ENCODE measurements at regions of chr6 and their contacts with region 1.

Region 1: GRCh38 chr6:149082286-149082707 is 235.2 kb upstream of the TAB2 start:
- DNase-seq: peak; percentile 69 to 82
- ATAC-seq: peak; percentile 52 to 75 (median 66)
- H3K4me3 ChIP-seq: no peak overlapping the region
- H3K27ac ChIP-seq: no peak overlapping the region
- H3K4me1 ChIP-seq: peaks cover 2 to 27% (median 21%) of the 10 kb centered on the region in 9 donors
- H3K27me3 ChIP-seq: peaks cover 0 to 15% (median 0%) of the 10 kb centered on the region in 7 donors
- CTCF ChIP-seq: peak; percentile 51 to 87 (median 86)

Region 2: GRCh38 chr6:148682990-148683389 is 399.3 kb before region 1 on chr6:
- intact Hi-C with region 1: no loop called
- DNase-seq: no peak
- ATAC-seq: peak in 6 of 8 donors; percentile 16 to 72 (median 46)
- H3K4me3 ChIP-seq: peak overlapping the region in 1 of 10 donors; percentile 3
- H3K27ac ChIP-seq: peak overlapping the region in 1 of 10 donors; percentile 41
- H3K4me1 ChIP-seq: peaks cover 0 to 22% (median 0%) of the 10 kb centered on the region in 9 donors
- H3K27me3 ChIP-seq: no peaks in the 10 kb centered on the region
- CTCF ChIP-seq: no peak

Region 3: DNA sequence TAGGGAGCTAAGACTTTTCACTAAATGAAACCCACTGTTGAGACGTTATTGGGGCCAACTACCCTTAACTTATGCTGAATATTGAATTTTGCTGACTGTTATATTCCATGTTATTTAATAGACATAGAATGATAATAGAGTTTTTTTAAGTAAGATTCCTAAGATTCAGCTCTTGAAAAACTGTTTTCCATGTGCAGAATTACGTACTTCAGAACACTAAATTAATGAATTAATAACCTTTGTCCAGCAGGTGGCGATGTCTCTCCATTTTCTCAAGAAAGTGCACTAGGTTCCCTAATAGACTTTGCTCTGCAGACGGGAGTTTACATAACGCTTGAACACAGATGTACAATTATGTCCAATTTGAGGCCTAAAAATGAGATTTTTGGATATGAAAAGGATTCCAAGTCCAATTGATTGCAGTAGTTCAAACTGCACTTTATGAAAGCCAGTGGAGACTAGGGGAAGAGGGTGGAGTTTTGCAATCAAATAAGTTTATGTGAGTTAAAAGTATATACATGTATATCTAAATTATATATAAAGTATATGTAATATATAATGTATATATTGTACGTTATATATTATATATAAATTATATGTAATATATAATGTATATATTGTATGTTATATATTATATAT is 53.4 kb before region 1 on chr6:
- intact Hi-C with region 1: loop called in 4 of 10 experiments (anchors 2 to 5 kb)
- DNase-seq: peak in 1 of 2 donors; percentile 84
- ATAC-seq: peak; percentile 57 to 80 (median 76)
- H3K4me3 ChIP-seq: no peak overlapping the region
- H3K27ac ChIP-seq: no peak overlapping the region
- H3K4me1 ChIP-seq: peaks cover 0 to 21% (median 0%) of the 10 kb centered on the region in 9 donors
- H3K27me3 ChIP-seq: no peaks in the 10 kb centered on the region
- CTCF ChIP-seq: peak; percentile 66 to 87 (median 80)

Region 4: DNA sequence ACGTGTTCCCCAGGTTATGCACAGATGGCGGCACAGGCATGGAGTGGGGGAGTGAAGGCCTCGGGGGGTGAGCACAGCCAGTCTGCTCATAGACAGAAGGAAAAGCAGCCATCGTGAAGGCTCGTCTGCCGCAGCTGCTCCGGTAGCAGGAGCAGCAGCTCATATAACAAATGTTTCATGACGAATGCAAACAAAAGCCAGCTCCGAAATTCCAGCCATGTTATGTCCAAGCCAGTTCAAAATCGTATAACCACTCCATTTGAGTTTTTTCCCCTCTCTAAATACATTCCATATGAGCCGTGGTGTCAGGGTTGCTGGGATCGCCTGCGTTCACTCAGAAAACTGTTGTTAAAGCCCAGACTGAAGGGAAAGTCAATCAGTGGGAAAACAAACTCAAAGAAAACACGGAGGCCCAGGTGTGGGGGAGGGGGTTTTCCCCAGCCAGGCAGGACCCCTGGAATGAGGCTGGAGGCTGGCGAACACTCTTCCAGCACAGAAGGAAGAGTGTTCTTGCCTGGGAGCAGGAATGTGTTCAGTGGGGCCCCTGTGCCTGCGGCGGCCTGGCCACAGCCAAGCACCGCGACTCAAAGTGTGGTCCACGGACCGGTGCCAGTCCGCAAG is 45.1 kb before region 1 on chr6:
- intact Hi-C with region 1: loop called in 3 of 10 experiments (anchors 5 kb)
- DNase-seq: no peak
- ATAC-seq: no peak
- H3K4me3 ChIP-seq: no peak overlapping the region
- H3K27ac ChIP-seq: no peak overlapping the region
- H3K4me1 ChIP-seq: peaks cover 0 to 10% (median 0%) of the 10 kb centered on the region in 9 donors
- H3K27me3 ChIP-seq: peaks cover 0 to 3% (median 0%) of the 10 kb centered on the region in 7 donors
- CTCF ChIP-seq: no peak

Region 5: GRCh38 chr6:149316798-149317655 is 234.7 kb after region 1 on chr6:
- intact Hi-C with region 1: loop called in 4 of 10 experiments (anchors 5 to 10 kb)
- DNase-seq: peak; percentile 90
- ATAC-seq: peak; percentile 95 to 97 (median 96)
- H3K4me3 ChIP-seq: peak overlapping the region; percentile 89 to 99 (median 93)
- H3K27ac ChIP-seq: peak overlapping the region; percentile 93 to 99 (median 97)
- H3K4me1 ChIP-seq: peaks cover 0 to 44% (median 26%) of the 10 kb centered on the region in 9 donors
- H3K27me3 ChIP-seq: peaks cover 0 to 11% (median 0%) of the 10 kb centered on the region in 7 donors
- CTCF ChIP-seq: no peak

Region 6: DNA sequence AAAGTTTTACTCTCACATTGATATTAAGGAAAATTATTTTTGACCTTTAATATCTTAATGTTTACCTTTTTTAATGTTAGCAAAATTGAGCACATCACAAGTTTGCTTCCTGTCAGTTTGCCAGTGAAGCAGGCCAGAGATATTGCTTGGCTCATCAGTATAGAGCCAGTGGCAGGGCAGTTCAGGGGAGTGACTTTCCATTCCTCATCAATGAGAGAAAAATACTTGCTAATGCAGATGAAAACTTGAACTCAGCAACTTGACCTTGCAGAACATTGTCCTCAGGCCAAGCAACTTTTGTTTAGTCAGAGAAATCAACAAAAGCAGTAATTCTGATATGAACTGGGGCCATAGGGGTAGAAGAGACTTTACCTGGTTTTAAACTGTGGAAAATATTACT is 242.1 kb after region 1 on chr6:
- intact Hi-C with region 1: loop called in 4 of 10 experiments (anchors 5 to 10 kb)
- DNase-seq: no peak
- ATAC-seq: peak in 2 of 8 donors; percentile 59 to 67
- H3K4me3 ChIP-seq: no peak overlapping the region
- H3K27ac ChIP-seq: no peak overlapping the region
- H3K4me1 ChIP-seq: peaks cover 5 to 94% (median 64%) of the 10 kb centered on the region in 9 donors
- H3K27me3 ChIP-seq: no peaks in the 10 kb centered on the region
- CTCF ChIP-seq: no peak

Region 7: DNA sequence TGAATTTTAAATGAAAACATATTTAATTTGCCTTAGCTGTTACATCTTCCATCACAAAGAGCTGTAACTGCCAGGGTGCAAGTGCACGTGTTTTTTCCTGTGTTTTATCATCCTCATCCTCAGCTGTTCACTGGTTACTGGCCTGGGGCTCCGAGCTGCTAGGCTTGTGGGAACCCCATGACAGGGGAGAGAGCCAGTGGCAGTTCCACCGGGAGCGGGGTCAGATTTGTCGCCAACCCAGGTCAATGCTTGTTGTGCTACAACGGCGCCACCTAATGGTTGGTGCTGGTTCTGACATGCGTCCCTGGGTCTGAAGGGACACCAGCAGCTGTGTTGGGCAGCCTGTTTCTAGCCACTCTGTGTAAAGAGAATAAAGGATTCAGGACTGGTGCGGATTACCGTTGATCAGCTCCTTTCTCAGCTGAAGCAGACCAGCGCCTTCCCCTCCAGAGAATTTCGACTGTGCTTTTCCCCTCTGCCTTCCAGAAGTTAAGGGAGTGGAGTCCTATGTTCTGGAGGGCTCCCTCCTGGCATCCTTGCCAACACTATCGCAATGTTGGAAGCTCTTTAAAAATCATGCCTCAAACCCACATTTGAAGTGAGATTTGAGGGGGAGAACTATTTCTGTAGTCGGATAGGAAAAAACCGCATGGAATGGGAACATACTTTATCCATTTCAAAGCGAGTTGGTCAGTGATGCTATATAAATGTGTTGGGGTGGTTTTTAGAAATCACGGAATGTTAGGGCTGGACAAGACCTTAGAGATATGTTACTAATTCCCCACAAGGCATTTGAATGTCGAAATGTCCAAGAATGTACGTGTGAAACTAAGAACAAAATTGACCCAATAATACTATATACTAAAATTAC is 349.8 kb after region 1 on chr6:
- intact Hi-C with region 1: loop called (anchors 1 to 5 kb)
- DNase-seq: peak; percentile 87 to 89
- ATAC-seq: peak; percentile 89 to 97 (median 93)
- H3K4me3 ChIP-seq: no peak overlapping the region
- H3K27ac ChIP-seq: no peak overlapping the region
- H3K4me1 ChIP-seq: peaks cover 0 to 7% (median 0%) of the 10 kb centered on the region in 9 donors
- H3K27me3 ChIP-seq: peaks cover 0 to 22% (median 0%) of the 10 kb centered on the region in 7 donors
- CTCF ChIP-seq: peak; percentile 78 to 97 (median 95)

Region 8: GRCh38 chr6:149513915-149514314 is 431.6 kb after region 1 on chr6:
- intact Hi-C with region 1: loop called in 9 of 10 experiments (anchors 2 to 10 kb)
- DNase-seq: no peak
- ATAC-seq: peak in 2 of 8 donors; percentile 14 to 20
- H3K4me3 ChIP-seq: no peak overlapping the region
- H3K27ac ChIP-seq: no peak overlapping the region
- H3K4me1 ChIP-seq: peaks cover 0 to 8% (median 0%) of the 10 kb centered on the region in 9 donors
- H3K27me3 ChIP-seq: no peaks in the 10 kb centered on the region
- CTCF ChIP-seq: no peak

Measured in heart right ventricle (tissue), 16 donors.